PC-9 (cell line): ENCODE measurements at regions of chr11 and their contacts with region 1.

Region 1: GRCh38 chr11:124837491-124837856 is 27.8 kb upstream of the ROBO3 start:
- DNase-seq: peak; percentile 22 to 68
- H3K4me3 ChIP-seq: 0 out of 2 replicates have a peak overlapping the region, but pooled peaks have one; percentile 11
- H3K27ac ChIP-seq: no peak overlapping the region
- H3K4me1 ChIP-seq: peaks cover 48% of the 10 kb centered on the region
- H3K27me3 ChIP-seq: peaks cover 13% of the 10 kb centered on the region
- CTCF ChIP-seq: peak; percentile 66

Region 2: GRCh38 chr11:124070915-124071635 is 766.4 kb before region 1 on chr11:
- CTCF ChIA-PET with region 1: interaction called, 8 read pairs
- POLR2A ChIA-PET with region 1: no interaction called
- intact Hi-C with region 1: loop called (anchors 5 kb)
- DNase-seq: peak in 1 of 2 experiments; percentile 45
- H3K4me3 ChIP-seq: no peak overlapping the region
- H3K27ac ChIP-seq: no peak overlapping the region
- H3K4me1 ChIP-seq: no peaks in the 10 kb centered on the region
- H3K27me3 ChIP-seq: peaks cover 24% of the 10 kb centered on the region; the same call in 1 of the 2 replicates
- CTCF ChIP-seq: peak; percentile 85

Region 3: GRCh38 chr11:124644426-124645280 is 192.8 kb before region 1 on chr11:
- CTCF ChIA-PET with region 1: interaction called, 5 read pairs
- POLR2A ChIA-PET with region 1: no interaction called
- intact Hi-C with region 1: loop called (anchors 1 kb)
- DNase-seq: peak; percentile 44 to 53
- H3K4me3 ChIP-seq: no peak overlapping the region
- H3K27ac ChIP-seq: no peak overlapping the region
- H3K4me1 ChIP-seq: no peaks in the 10 kb centered on the region
- H3K27me3 ChIP-seq: no peaks in the 10 kb centered on the region
- CTCF ChIP-seq: peak; percentile 87

Region 4: DNA sequence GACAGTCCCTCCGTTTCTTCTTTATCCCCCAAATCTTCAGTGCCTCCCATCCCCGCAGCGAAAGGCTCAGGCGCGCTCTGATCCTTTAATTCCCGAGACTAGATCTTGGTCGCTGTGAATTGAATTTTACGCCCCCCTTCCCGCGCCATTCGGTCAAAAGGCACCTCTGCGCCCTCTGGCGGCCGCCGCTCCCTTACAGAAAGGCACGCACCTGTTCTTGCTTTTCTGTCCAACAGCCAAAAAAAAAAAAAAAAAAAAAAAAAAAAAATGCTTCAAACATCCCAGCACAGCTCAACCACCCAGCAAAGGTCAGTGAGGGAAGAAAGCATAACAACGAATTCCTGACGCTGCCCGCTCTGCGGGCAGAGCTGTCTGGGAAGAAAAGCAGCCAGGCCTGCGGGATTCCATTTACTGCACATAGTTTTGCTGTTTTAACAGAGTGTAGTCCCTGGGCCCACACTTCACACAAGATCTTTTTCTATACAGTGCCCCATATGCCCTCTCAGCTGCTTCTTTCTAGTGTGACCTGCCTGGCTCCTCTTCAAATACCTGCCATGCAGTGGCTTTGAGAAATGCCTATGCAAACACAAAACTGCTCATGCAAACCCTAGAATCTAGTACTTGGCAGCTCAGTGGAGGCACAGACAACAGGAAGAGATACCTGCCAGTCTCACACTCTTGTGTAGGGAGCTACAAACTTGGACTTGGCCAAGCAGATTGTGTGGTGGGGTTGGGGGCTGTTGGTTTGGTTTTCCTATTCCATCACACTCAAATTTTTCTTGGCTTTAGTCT is 74.1 kb before region 1 on chr11:
- CTCF ChIA-PET with region 1: interaction called, 21 read pairs
- POLR2A ChIA-PET with region 1: no interaction called
- intact Hi-C with region 1: loop called (anchors 2 kb)
- DNase-seq: peak; percentile 90
- H3K4me3 ChIP-seq: peak overlapping the region; percentile 98
- H3K27ac ChIP-seq: peak overlapping the region; percentile 56
- H3K4me1 ChIP-seq: peaks cover 29% of the 10 kb centered on the region
- H3K27me3 ChIP-seq: no peaks in the 10 kb centered on the region
- CTCF ChIP-seq: peak; percentile 82

Region 5: GRCh38 chr11:125001079-125001778 is 163.8 kb after region 1 on chr11:
- CTCF ChIA-PET with region 1: interaction called, 14 read pairs
- POLR2A ChIA-PET with region 1: no interaction called
- intact Hi-C with region 1: no loop called
- DNase-seq: no peak
- H3K4me3 ChIP-seq: no peak overlapping the region
- H3K27ac ChIP-seq: no peak overlapping the region
- H3K4me1 ChIP-seq: peaks cover 6% of the 10 kb centered on the region; the same call in 1 of the 2 replicates
- H3K27me3 ChIP-seq: no peaks in the 10 kb centered on the region
- CTCF ChIP-seq: no peak

Region 6: GRCh38 chr11:125345421-125346178 is 508.1 kb after region 1 on chr11:
- CTCF ChIA-PET with region 1: no interaction called
- POLR2A ChIA-PET with region 1: no interaction called
- intact Hi-C with region 1: loop called (anchors 5 kb)
- DNase-seq: peak; percentile 44 to 45
- H3K4me3 ChIP-seq: no peak overlapping the region
- H3K27ac ChIP-seq: no peak overlapping the region
- H3K4me1 ChIP-seq: no peaks in the 10 kb centered on the region
- H3K27me3 ChIP-seq: no peaks in the 10 kb centered on the region
- CTCF ChIP-seq: peak; percentile 87